Activated naive CD4-positive, alpha-beta T cell treated with anti-CD3 and anti-CD28 coated beads for 36 hours (primary cell): ENCODE measurements at regions of chr1 and their contacts with region 1.

Region 1: GRCh38 chr1:199113265-199113869 is 474.5 kb downstream of the PTPRC start:
- DNase-seq: peak; percentile 87
- H3K4me3 Mint-ChIP-seq: no peak overlapping the region
- H3K27ac Mint-ChIP-seq: no peak overlapping the region
- H3K4me1 Mint-ChIP-seq: no peaks in the 10 kb centered on the region
- H3K27me3 Mint-ChIP-seq: no peaks in the 10 kb centered on the region

Region 2: GRCh38 chr1:198763298-198763714 is 350.1 kb before region 1 on chr1:
- CTCF ChIA-PET with region 1: interaction called, 16 read pairs
- intact Hi-C with region 1: no loop called
- DNase-seq: no peak
- H3K4me3 Mint-ChIP-seq: no peak overlapping the region
- H3K27ac Mint-ChIP-seq: no peak overlapping the region
- H3K4me1 Mint-ChIP-seq: peaks cover 38% of the 10 kb centered on the region
- H3K27me3 Mint-ChIP-seq: no peaks in the 10 kb centered on the region

Region 3: DNA sequence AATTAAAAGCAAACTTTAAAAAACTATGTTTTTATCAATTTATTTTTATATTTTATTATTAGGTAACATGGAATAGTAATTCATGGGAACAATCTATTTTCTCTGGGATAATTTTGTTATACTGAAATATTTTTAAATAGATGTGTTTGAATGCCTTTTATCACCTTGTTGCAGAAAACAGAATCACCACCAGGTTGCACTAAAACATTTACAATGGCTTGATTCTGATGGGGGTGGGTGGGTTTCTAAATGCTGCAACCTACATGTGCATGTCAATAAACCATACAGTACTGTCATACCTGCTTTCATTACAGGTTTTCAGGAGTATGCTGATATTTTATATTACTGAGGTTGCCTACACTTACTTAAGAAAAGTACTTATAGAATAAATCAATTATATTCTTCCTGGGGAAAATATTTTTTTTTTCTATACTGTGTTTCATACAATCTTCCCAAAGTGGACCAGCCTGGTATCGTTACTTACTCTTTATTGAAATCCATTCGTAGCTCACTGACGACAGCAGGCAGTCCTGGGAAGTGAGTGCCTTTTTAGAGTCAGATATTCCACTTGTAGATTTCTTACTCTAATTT is 341.7 kb before region 1 on chr1:
- CTCF ChIA-PET with region 1: interaction called, 16 read pairs
- intact Hi-C with region 1: loop called (anchors 1 kb)
- DNase-seq: no peak
- H3K4me3 Mint-ChIP-seq: no peak overlapping the region
- H3K27ac Mint-ChIP-seq: no peak overlapping the region
- H3K4me1 Mint-ChIP-seq: peaks cover 5% of the 10 kb centered on the region
- H3K27me3 Mint-ChIP-seq: no peaks in the 10 kb centered on the region

Region 4: DNA sequence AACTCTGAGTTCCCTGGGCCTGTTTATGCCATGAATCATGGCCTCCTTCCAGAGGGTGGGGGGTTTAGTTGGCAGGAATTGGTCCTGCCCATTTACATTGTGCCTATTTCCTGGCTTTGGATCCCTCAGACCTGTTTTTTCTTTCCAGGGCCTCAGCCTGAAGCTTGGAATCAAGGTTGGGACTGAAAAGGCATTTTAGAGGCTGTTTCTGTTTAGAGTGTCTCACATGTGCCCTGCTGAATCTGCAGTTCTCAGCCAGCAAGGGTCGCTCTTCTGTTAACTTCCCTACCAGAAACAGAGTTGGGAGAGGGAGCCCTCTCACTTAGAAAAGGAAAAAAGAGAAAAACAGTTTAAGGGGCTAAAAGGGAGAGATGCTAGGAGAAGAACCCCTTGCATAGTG is 283.4 kb before region 1 on chr1:
- CTCF ChIA-PET with region 1: interaction called, 9 read pairs
- intact Hi-C with region 1: loop called (anchors 1 kb)
- DNase-seq: peak; percentile 23
- H3K4me3 Mint-ChIP-seq: no peak overlapping the region
- H3K27ac Mint-ChIP-seq: no peak overlapping the region
- H3K4me1 Mint-ChIP-seq: no peaks in the 10 kb centered on the region
- H3K27me3 Mint-ChIP-seq: no peaks in the 10 kb centered on the region

Region 5: GRCh38 chr1:198880818-198881597 is 232.4 kb before region 1 on chr1:
- CTCF ChIA-PET with region 1: interaction called, 3 read pairs
- intact Hi-C with region 1: loop called (anchors 2 kb)
- DNase-seq: peak; percentile 40
- H3K4me3 Mint-ChIP-seq: no peak overlapping the region
- H3K27ac Mint-ChIP-seq: peak overlapping the region; percentile 32
- H3K4me1 Mint-ChIP-seq: peaks cover 33% of the 10 kb centered on the region
- H3K27me3 Mint-ChIP-seq: no peaks in the 10 kb centered on the region

Region 6: DNA sequence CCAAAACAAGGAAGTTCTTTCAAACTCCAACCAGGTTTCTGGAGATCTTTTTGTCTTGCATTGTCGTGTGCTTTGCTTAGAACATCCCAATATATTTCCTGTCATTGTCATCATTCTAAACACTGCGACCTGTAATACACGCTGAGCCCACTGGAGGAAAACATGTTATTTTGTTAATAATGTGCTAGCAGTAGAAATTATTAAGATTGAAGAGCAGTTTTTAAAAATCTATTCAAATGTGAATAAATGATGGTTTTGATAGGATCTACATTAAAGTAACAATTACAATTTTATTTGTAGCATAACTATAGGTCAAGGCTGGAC is 206.0 kb before region 1 on chr1:
- CTCF ChIA-PET with region 1: interaction called, 5 read pairs
- intact Hi-C with region 1: loop called (anchors 5 kb)
- DNase-seq: no peak
- H3K4me3 Mint-ChIP-seq: peak overlapping the region; percentile 20
- H3K27ac Mint-ChIP-seq: no peak overlapping the region
- H3K4me1 Mint-ChIP-seq: peaks cover 34% of the 10 kb centered on the region
- H3K27me3 Mint-ChIP-seq: no peaks in the 10 kb centered on the region

Region 7: GRCh38 chr1:199551967-199552565 is 438.7 kb after region 1 on chr1:
- CTCF ChIA-PET with region 1: no interaction called
- intact Hi-C with region 1: loop called (anchors 2 kb)
- DNase-seq: peak; percentile 61
- H3K4me3 Mint-ChIP-seq: no peak overlapping the region
- H3K27ac Mint-ChIP-seq: no peak overlapping the region
- H3K4me1 Mint-ChIP-seq: no peaks in the 10 kb centered on the region
- H3K27me3 Mint-ChIP-seq: peaks cover 10% of the 10 kb centered on the region